Cardiac septum (tissue), 1 donor: ENCODE measurements at regions of chr3 and their contacts with region 1.

Region 1: DNA sequence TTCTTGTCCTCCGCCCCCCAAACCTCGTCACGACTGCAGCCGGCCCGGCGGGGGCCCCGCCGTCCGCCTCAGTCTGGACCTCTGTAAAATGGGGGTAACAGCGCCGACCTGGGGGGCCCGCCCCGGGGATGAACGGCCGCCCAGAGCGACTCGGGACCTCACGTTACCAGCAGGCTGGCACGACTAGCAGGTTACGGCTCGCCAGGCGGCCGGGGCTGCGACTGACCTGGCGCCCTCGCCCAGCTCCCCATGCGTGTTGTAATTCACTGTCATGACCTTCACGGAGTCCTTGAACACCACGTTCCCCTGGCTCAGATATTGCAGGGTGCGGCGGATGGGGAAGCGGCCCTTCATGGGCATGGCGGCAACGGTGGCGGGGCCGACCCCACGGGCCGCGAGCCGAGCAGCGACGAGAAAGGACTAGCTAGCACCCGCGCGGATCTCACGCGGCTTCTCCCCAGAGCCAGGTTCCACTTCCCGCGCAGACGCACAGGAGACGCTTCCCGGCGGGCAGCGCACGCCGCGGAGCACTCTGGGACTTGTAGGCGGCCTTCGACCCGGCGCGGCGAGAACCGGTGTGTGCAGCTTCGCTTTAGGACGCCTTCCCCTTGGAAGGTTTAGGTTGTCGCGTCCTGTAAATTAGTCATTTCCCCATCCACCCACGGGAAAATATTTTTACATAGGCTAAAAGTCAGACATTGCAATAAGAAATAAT is at the start of gene MRPS25:
- DNase-seq: peak; percentile 97
- total RNA-seq, gene MRPS25: 77.7 TPM

Region 2: GRCh38 chr3:14947886-14948555 is 117.0 kb before region 1 on chr3:
- intact Hi-C with region 1: loop called (anchors 2 kb)
- DNase-seq: peak; percentile 99

Region 3: GRCh38 chr3:15098503-15099363 is 33.7 kb after region 1 on chr3 and contains the start of gene RBSN:
- intact Hi-C with region 1: loop called (anchors 1 kb)
- DNase-seq: peak; percentile 98
- total RNA-seq, gene RBSN: 24.1 TPM

Region 4: DNA sequence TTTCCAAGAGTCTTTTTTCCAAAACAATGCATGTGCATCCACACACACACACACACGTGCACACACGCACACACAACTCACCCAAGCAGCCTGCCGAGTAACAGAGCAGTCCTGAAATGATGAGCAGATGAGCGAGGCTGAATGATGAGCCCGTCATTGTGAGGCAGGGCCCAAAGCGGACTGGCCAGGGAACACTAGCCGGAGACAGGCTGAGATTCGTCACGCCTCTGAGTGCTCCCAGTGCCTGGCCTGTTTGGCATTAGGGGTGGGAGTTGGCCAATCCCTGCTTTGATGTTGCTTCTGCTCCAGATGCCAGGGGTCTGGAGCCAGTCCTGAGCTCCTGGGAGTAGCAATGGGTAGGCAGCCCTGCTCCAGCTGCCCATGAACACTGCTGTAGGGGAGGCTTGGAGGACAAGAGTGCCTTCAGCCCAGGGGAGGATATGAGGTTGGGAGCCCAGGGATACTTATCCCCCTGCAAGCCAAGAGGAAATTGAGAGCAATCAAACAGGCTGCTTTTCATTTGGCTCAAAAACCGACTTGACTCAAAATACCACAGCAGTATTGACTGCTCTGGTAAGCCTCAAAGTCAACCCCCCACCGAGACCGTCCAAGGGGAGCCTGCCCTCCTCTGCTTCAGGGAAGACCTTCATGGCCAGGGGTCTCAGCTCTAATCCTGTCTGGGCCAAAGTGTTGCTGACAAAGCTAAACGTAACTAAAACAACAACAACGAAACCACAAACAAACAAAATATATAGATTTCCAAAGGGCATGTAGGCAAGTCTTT is 433.6 kb after region 1 on chr3:
- intact Hi-C with region 1: no loop called
- DNase-seq: no peak